Ascending aorta (tissue), 2 donors: ENCODE measurements at regions of chr3 and their contacts with region 1.

Region 1: DNA sequence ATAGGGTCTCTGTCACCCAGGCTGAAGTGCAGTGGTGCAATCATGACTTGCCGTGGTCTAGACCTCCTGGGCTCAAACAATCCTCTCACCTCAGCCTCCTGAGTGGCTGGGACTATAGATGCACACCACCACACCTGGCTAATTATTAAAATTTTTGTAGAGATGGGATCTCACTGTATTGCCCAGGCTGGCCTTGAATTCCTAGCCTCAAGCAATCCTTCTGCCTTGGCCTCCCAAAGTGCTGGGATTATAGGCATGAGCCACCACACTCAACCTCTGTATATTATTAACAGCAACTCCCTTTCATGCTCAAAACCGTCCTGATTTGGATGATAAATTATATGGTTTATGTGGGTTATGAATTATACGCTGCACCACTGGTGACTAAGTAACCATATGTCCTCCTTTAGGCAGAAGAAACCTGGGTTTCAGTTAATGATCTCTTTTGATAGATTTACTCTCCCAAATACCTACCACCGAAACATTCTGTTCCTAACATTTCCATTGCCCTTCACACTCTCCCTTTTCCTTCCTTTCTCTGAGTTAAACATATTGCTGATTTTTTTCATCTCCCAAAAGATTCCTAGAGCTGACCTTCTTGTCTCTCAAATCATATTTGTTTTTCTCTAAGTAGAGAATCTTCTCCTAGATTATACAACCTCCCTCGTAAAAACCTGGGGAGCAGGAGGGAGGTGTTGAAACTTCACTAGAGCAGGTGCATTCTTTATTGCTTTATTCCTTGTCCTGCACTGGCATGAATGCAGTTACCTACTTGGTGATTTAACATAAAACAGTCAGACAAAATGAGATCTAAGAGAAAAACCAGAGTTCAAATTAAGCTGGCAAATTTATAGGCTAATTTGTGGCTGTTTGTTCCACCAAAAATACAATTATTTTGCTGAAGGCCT is 32.9 kb downstream of the PCYT1A start:
- DNase-seq: no peak
- H3K4me3 ChIP-seq: no peak overlapping the region
- H3K27ac ChIP-seq: no peak overlapping the region
- H3K4me1 ChIP-seq: no peaks in the 10 kb centered on the region
- H3K27me3 ChIP-seq: no peaks in the 10 kb centered on the region
- CTCF ChIP-seq: no peak

Region 2: GRCh38 chr3:196523841-196524240 is 269.2 kb after region 1 on chr3:
- intact Hi-C with region 1: loop called (anchors 2 kb)
- DNase-seq: no peak
- H3K4me3 ChIP-seq: no peak overlapping the region
- H3K27ac ChIP-seq: no peak overlapping the region
- H3K4me1 ChIP-seq: no peaks in the 10 kb centered on the region
- H3K27me3 ChIP-seq: no peaks in the 10 kb centered on the region
- CTCF ChIP-seq: no peak